CD4-positive, alpha-beta memory T cell (primary cell): ENCODE measurements at regions of chr6 and their contacts with region 1.

Region 1: DNA sequence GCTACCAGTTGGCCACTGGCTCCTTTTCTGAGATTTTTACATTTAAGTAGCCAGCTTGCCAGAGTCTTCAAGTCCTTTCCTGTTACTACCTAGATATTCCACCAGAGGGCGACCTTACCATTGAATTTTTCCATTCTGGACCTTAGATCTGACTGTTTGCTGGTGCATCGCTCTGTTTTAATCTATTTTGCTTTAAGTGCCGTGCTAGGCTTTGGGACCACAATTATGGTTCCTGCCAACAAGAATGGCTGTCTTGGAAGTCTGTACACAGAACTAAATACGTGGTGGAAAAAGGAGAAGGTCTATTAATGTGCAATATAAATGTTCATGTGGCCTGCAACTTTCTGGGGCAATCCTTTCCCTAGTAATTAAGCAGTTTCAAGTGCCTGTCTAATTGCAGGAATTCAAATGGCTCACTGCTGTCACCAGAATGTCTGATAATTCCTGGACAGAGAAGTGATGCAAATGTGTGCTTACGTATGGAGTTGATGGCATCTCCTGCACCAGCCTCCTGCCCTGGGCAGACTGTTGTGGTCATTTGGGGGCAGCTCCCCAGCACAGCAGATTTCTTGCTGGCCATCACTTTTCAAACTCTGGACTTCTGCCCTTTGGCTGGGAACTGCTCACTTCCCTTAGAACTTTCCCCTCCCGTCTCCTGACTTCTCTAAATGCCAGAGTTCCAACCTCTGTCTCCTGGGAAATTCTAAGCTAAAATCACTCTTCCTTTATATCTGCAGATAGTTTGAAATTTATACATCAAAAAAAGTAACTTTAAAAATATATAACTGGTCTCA is 5.6 kb upstream of the HLA-DOA start:
- DNase-seq: peak; percentile 66 to 79 (median 73)
- H3K4me3 ChIP-seq: no peak overlapping the region
- H3K4me3 Mint-ChIP-seq: no peak overlapping the region
- H3K27ac ChIP-seq: no peak overlapping the region
- H3K27ac Mint-ChIP-seq: no peak overlapping the region
- H3K4me1 ChIP-seq: peaks cover 24% of the 10 kb centered on the region
- H3K4me1 Mint-ChIP-seq: peaks cover 0 to 20% (median 20%) of the 10 kb centered on the region in 4 donors
- H3K27me3 ChIP-seq: peaks cover 11% of the 10 kb centered on the region
- H3K27me3 Mint-ChIP-seq: peaks cover 8 to 11% of the 10 kb centered on the region in 2 donors

Region 2: DNA sequence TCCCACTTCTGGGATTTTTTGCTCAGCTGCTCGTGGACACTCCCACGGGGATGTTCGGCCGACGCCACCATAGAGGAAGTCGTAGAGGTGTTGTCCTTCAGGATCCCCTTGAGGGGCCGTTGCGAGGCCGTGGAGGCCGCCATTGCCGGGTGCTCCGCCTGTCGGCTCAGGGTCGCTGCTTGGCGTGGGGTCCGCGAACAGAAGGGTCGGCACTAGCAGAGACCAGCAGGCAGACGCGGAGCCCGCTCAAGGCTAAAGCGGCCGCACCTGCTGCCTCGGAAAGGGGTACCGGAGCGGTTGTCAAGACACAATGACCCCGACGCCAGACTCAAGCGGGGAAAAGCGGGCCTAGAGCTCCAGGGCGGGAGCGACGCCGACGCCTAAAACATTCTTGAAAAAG is 135.3 kb before region 1 on chr6:
- CTCF ChIA-PET with region 1: no interaction called
- POLR2A ChIA-PET with region 1: no interaction called
- intact Hi-C with region 1: no loop called
- DNase-seq: no peak
- H3K4me3 ChIP-seq: no peak overlapping the region
- H3K4me3 Mint-ChIP-seq: no peak overlapping the region
- H3K27ac ChIP-seq: no peak overlapping the region
- H3K27ac Mint-ChIP-seq: no peak overlapping the region
- H3K4me1 ChIP-seq: no peaks in the 10 kb centered on the region
- H3K4me1 Mint-ChIP-seq: no peaks in the 10 kb centered on the region
- H3K27me3 ChIP-seq: no peaks in the 10 kb centered on the region
- H3K27me3 Mint-ChIP-seq: no peaks in the 10 kb centered on the region

Region 3: GRCh38 chr6:32993363-32993973 is 21.6 kb before region 1 on chr6:
- CTCF ChIA-PET with region 1: no interaction called
- POLR2A ChIA-PET with region 1: no interaction called
- intact Hi-C with region 1: no loop called
- DNase-seq: no peak
- H3K4me3 ChIP-seq: no peak overlapping the region
- H3K4me3 Mint-ChIP-seq: no peak overlapping the region
- H3K27ac ChIP-seq: no peak overlapping the region
- H3K27ac Mint-ChIP-seq: no peak overlapping the region
- H3K4me1 ChIP-seq: no peaks in the 10 kb centered on the region
- H3K4me1 Mint-ChIP-seq: no peaks in the 10 kb centered on the region
- H3K27me3 ChIP-seq: no peaks in the 10 kb centered on the region
- H3K27me3 Mint-ChIP-seq: peaks cover 6 to 11% of the 10 kb centered on the region in 2 donors

Region 4: GRCh38 chr6:33075568-33076405 is 60.7 kb after region 1 on chr6 and contains the start of gene HLA-DPB1:
- CTCF ChIA-PET with region 1: interaction called, 108 read pairs
- POLR2A ChIA-PET with region 1: interaction called, 5 read pairs
- intact Hi-C with region 1: loop called (anchors 5 kb)
- DNase-seq: peak; percentile 56 to 75 (median 64)
- H3K4me3 ChIP-seq: peak within 1 kb of the TSS; percentile 39 to 79
- H3K4me3 Mint-ChIP-seq: peak within 1 kb of the TSS; percentile 70 to 92 (median 87)
- H3K27ac ChIP-seq: peak within 1 kb of the TSS; percentile 76
- H3K27ac Mint-ChIP-seq: peak within 1 kb of the TSS; percentile 34 to 93 (median 87)
- H3K4me1 ChIP-seq: peaks cover 49% of the 10 kb centered on the region
- H3K4me1 Mint-ChIP-seq: peaks cover 28 to 57% (median 38%) of the 10 kb centered on the region in 4 donors
- H3K27me3 ChIP-seq: no peaks in the 10 kb centered on the region
- H3K27me3 Mint-ChIP-seq: peaks cover 2 to 3% of the 10 kb centered on the region in 2 donors
- total RNA-seq, gene HLA-DPB1: 14.5 to 17.2 TPM

Region 5: DNA sequence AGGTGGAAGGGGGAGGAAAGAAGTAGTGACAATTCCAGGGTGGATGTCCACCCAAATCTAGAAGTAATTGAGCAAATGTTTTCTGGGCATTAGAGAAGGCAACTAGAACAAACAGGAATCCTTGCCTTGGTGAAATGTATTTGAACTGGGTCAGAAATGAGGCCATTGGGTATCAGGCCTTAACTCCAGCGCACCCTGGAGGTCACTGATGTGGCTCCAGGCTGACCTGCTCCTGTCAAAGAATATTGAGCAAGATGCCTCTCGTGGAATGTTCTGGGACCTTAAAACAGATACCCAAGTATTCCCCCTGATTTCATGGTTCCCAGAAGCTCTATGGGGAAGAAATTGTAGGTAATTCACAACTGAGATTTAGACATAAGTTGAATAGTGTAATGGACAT is 67.7 kb after region 1 on chr6:
- CTCF ChIA-PET with region 1: interaction called, 108 read pairs
- POLR2A ChIA-PET with region 1: interaction called, 4 read pairs
- intact Hi-C with region 1: loop called (anchors 2 kb)
- DNase-seq: peak in 1 of 5 donors; percentile 10
- H3K4me3 ChIP-seq: no peak overlapping the region
- H3K4me3 Mint-ChIP-seq: peak overlapping the region in 1 of 8 donors; percentile 1
- H3K27ac ChIP-seq: no peak overlapping the region
- H3K27ac Mint-ChIP-seq: no peak overlapping the region
- H3K4me1 ChIP-seq: peaks cover 11% of the 10 kb centered on the region
- H3K4me1 Mint-ChIP-seq: peaks cover 2 to 28% (median 13%) of the 10 kb centered on the region in 4 donors
- H3K27me3 ChIP-seq: no peaks in the 10 kb centered on the region
- H3K27me3 Mint-ChIP-seq: peaks cover 0 to 1% of the 10 kb centered on the region in 2 donors

Region 6: DNA sequence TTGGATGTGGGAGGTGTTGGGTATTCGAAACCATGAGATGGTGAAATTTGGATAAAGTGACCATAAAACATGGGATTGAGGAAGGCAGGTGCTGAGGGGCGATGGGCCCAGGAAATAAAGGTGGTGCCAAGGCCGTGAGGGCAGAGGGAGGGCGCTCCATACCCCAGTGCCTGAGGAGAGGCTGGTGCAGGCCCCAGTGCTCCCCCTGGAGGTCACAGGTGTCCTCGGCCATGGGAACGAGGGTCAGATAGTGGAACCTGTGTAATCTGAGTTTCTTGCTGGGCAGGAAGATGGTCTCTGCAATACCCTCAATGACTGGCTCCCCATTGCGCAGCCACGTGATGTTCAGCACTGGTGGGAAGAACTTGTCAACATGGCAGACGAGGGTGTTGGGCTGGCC is 76.9 kb after region 1 on chr6:
- CTCF ChIA-PET with region 1: interaction called, 5 read pairs
- POLR2A ChIA-PET with region 1: no interaction called
- intact Hi-C with region 1: loop called (anchors 1 kb)
- DNase-seq: peak in 4 of 5 donors; percentile 33 to 41 (median 36)
- H3K4me3 ChIP-seq: no peak overlapping the region
- H3K4me3 Mint-ChIP-seq: no peak overlapping the region
- H3K27ac ChIP-seq: no peak overlapping the region
- H3K27ac Mint-ChIP-seq: no peak overlapping the region
- H3K4me1 ChIP-seq: no peaks in the 10 kb centered on the region
- H3K4me1 Mint-ChIP-seq: no peaks in the 10 kb centered on the region
- H3K27me3 ChIP-seq: no peaks in the 10 kb centered on the region
- H3K27me3 Mint-ChIP-seq: peaks cover 9 to 29% of the 10 kb centered on the region in 2 donors

Region 7: GRCh38 chr6:33147807-33148666 is 133.0 kb after region 1 on chr6:
- CTCF ChIA-PET with region 1: interaction called, 19 read pairs
- POLR2A ChIA-PET with region 1: no interaction called
- intact Hi-C with region 1: loop called (anchors 1 kb)
- DNase-seq: peak in 2 of 5 donors; percentile 11 to 29
- H3K4me3 ChIP-seq: no peak overlapping the region
- H3K4me3 Mint-ChIP-seq: no peak overlapping the region
- H3K27ac ChIP-seq: no peak overlapping the region
- H3K27ac Mint-ChIP-seq: no peak overlapping the region
- H3K4me1 ChIP-seq: no peaks in the 10 kb centered on the region
- H3K4me1 Mint-ChIP-seq: peaks cover 0 to 2% (median 0%) of the 10 kb centered on the region in 4 donors
- H3K27me3 ChIP-seq: no peaks in the 10 kb centered on the region
- H3K27me3 Mint-ChIP-seq: peaks cover 21 to 26% of the 10 kb centered on the region in 2 donors